Ascending aorta (tissue), 2 donors: ENCODE measurements at regions of chrX and their contacts with region 1.

Region 1: GRCh38 chrX:102652031-102652688 is 877 bp downstream of the GPRASP1 start:
- DNase-seq: peak in 1 of 2 donors; percentile 78
- H3K4me3 ChIP-seq: peak overlapping the region; percentile 59 to 72
- H3K27ac ChIP-seq: peak overlapping the region; percentile 73 to 75
- H3K4me1 ChIP-seq: no peaks in the 10 kb centered on the region
- H3K27me3 ChIP-seq: no peaks in the 10 kb centered on the region
- CTCF ChIP-seq: peak; percentile 38 to 61 (median 47)

Region 2: GRCh38 chrX:102560423-102561068 is 91.6 kb before region 1 on chrX:
- intact Hi-C with region 1: no loop called
- DNase-seq: no peak
- H3K4me3 ChIP-seq: no peak overlapping the region
- H3K27ac ChIP-seq: no peak overlapping the region
- H3K4me1 ChIP-seq: no peaks in the 10 kb centered on the region
- H3K27me3 ChIP-seq: no peaks in the 10 kb centered on the region
- CTCF ChIP-seq: no peak

Region 3: DNA sequence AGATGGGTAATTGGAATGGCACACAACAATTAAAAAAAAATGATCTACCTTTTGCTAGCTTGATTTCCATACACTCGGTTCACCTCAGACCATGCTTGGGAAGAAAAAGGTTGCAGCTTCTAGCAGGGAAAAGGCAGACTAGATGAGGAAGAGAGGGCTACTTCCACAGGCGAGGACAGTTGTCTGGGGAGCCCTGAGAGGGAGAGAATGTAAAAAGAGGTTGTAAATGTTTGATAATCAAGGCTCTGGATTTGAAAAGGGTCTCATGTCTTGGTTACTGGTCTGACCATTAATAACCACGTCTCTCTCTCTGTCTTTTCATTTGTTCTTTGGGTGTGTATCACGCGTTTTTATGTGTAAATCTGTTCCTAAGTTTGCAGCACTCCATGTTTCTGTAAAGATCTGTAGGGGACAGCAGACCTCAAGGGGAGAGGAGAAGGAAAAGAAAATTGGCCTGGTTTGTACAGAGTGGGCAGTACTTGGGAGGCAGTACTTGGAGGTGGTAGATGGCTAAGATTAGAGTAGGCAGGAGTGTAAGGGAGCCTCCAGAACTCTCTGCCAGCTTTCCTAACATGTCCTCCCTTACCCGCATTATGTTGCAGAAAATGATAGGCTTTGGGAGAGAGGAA is 52.1 kb before region 1 on chrX:
- intact Hi-C with region 1: loop called (anchors 2 kb)
- DNase-seq: no peak
- H3K4me3 ChIP-seq: peak overlapping the region; percentile 60 to 70
- H3K27ac ChIP-seq: peak overlapping the region; percentile 71 to 80
- H3K4me1 ChIP-seq: no peaks in the 10 kb centered on the region
- H3K27me3 ChIP-seq: no peaks in the 10 kb centered on the region
- CTCF ChIP-seq: no peak

Region 4: GRCh38 chrX:102684772-102685515 is 32.8 kb after region 1 on chrX:
- intact Hi-C with region 1: no loop called
- DNase-seq: no peak
- H3K4me3 ChIP-seq: no peak overlapping the region
- H3K27ac ChIP-seq: no peak overlapping the region
- H3K4me1 ChIP-seq: no peaks in the 10 kb centered on the region
- H3K27me3 ChIP-seq: no peaks in the 10 kb centered on the region
- CTCF ChIP-seq: no peak